Caco-2 (cell line): ENCODE measurements at regions of chr3 and their contacts with region 1.

Region 1: DNA sequence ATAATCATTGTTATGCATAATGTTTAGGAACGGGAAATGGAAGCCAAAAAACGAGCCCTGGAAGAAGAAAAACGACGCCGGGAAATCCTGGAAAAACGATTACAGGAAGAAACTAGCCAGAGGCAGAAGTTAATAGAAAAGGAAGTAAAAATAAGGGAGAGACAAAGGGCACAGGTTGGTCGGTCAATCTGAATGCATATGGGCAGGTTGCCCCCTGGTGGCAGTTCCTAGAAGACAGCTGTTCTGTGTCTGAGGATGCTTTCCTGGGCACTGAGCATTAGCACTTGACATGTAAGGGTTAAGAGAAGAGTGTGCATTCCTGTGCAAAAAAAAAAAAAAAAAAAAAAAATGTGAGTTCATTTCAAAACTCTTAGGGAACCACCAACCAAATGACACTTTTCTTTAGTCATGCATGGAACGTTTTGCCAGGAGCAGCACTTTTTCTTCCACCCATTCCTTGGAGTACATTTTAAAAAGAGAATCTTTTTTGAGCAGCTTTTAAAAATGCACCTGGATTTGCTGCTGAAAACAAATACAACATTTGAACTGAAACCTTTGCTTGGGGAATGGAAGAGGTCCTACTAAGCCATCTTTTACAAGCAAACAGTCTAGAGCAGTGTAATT is 11.1 kb upstream of the ABHD10 start:
- DNase-seq: peak; percentile 80 to 86
- H3K4me3 ChIP-seq: no peak overlapping the region
- H3K4me3 Mint-ChIP-seq: no peak overlapping the region
- H3K27ac Mint-ChIP-seq: peak overlapping the region; percentile 0
- H3K4me1 ChIP-seq: peaks cover 6% of the 10 kb centered on the region
- H3K4me1 Mint-ChIP-seq: peaks cover 12% of the 10 kb centered on the region
- H3K27me3 ChIP-seq: no peaks in the 10 kb centered on the region
- H3K27me3 Mint-ChIP-seq: no peaks in the 10 kb centered on the region
- CTCF ChIP-seq: peak; percentile 74 to 88

Region 2: GRCh38 chr3:111577794-111578685 is 389.7 kb before region 1 on chr3:
- CTCF ChIA-PET with region 1: no interaction called
- POLR2A ChIA-PET with region 1: no interaction called
- intact Hi-C with region 1: loop called (anchors 5 kb)
- DNase-seq: peak in 1 of 2 experiments; percentile 48
- H3K4me3 ChIP-seq: no peak overlapping the region
- H3K4me3 Mint-ChIP-seq: no peak overlapping the region
- H3K27ac Mint-ChIP-seq: no peak overlapping the region
- H3K4me1 ChIP-seq: peaks cover 20% of the 10 kb centered on the region
- H3K4me1 Mint-ChIP-seq: peaks cover 30% of the 10 kb centered on the region
- H3K27me3 ChIP-seq: no peaks in the 10 kb centered on the region
- H3K27me3 Mint-ChIP-seq: no peaks in the 10 kb centered on the region
- CTCF ChIP-seq: peak in 1 of 2 experiments; percentile 63

Region 3: DNA sequence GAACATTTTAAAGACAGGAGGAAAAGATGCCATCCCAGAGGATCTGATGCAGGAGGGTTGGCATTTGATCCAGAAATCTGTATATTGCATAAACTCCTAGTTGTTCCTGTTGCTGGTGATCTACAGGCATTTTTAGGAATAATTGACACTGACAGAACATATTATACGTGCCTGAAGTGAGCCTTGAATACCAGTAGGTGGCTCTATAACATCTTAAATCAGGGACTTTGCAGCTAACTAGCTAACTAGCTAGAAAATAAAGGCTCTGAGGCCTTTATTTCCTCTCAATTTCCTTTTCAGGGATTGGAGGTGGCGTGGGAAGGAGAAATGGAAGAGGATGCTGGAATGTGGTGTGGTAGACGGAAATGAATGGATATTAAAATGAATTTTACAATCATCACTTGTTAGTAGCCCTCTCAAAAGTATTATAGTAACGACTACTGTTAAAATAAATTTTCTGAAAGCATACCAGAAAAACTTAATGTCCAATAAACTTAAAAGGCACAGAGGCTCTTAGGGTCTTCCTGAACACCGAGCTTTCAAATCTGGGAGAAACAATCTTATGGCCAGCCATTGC is 298.8 kb before region 1 on chr3:
- CTCF ChIA-PET with region 1: interaction called, 6 read pairs
- POLR2A ChIA-PET with region 1: no interaction called
- intact Hi-C with region 1: loop called (anchors 1 kb)
- DNase-seq: peak in 1 of 2 experiments; percentile 30
- H3K4me3 ChIP-seq: no peak overlapping the region
- H3K4me3 Mint-ChIP-seq: no peak overlapping the region
- H3K27ac Mint-ChIP-seq: no peak overlapping the region
- H3K4me1 ChIP-seq: peaks cover 4% of the 10 kb centered on the region; the same call in 1 of the 2 replicates
- H3K4me1 Mint-ChIP-seq: peaks cover 18% of the 10 kb centered on the region
- H3K27me3 ChIP-seq: no peaks in the 10 kb centered on the region
- H3K27me3 Mint-ChIP-seq: no peaks in the 10 kb centered on the region
- CTCF ChIP-seq: peak; percentile 46 to 70

Region 4: GRCh38 chr3:111859974-111860859 is 107.5 kb before region 1 on chr3:
- CTCF ChIA-PET with region 1: interaction called, 6 read pairs
- POLR2A ChIA-PET with region 1: no interaction called
- intact Hi-C with region 1: loop called (anchors 1 kb)
- DNase-seq: peak; percentile 71 to 73
- H3K4me3 ChIP-seq: peak overlapping the region; percentile 95
- H3K4me3 Mint-ChIP-seq: peak overlapping the region; percentile 93
- H3K27ac Mint-ChIP-seq: peak overlapping the region; percentile 80
- H3K4me1 ChIP-seq: peaks cover 25% of the 10 kb centered on the region
- H3K4me1 Mint-ChIP-seq: peaks cover 47% of the 10 kb centered on the region
- H3K27me3 ChIP-seq: no peaks in the 10 kb centered on the region
- H3K27me3 Mint-ChIP-seq: no peaks in the 10 kb centered on the region
- CTCF ChIP-seq: peak; percentile 26 to 44

Region 5: GRCh38 chr3:111895079-111895478 is 72.7 kb before region 1 on chr3:
- CTCF ChIA-PET with region 1: interaction called, 5 read pairs
- POLR2A ChIA-PET with region 1: no interaction called
- intact Hi-C with region 1: loop called (anchors 1 kb)
- DNase-seq: no peak
- H3K4me3 ChIP-seq: no peak overlapping the region
- H3K4me3 Mint-ChIP-seq: no peak overlapping the region
- H3K27ac Mint-ChIP-seq: no peak overlapping the region
- H3K4me1 ChIP-seq: no peaks in the 10 kb centered on the region
- H3K4me1 Mint-ChIP-seq: no peaks in the 10 kb centered on the region
- H3K27me3 ChIP-seq: no peaks in the 10 kb centered on the region
- H3K27me3 Mint-ChIP-seq: no peaks in the 10 kb centered on the region
- CTCF ChIP-seq: peak; percentile 20 to 39

Region 6: GRCh38 chr3:111978493-111979433 is 11.0 kb after region 1 on chr3 and contains the start of gene ABHD10:
- CTCF ChIA-PET with region 1: interaction called, 17 read pairs
- POLR2A ChIA-PET with region 1: no interaction called
- intact Hi-C with region 1: no loop called
- DNase-seq: peak; percentile 93 to 96
- H3K4me3 ChIP-seq: peak within 1 kb of the TSS; percentile 79
- H3K4me3 Mint-ChIP-seq: peak within 1 kb of the TSS; percentile 84
- H3K27ac Mint-ChIP-seq: peak within 1 kb of the TSS; percentile 88
- H3K4me1 ChIP-seq: no peaks in the 10 kb centered on the region; the same call in 1 of the 2 replicates
- H3K4me1 Mint-ChIP-seq: peaks cover 7% of the 10 kb centered on the region
- H3K27me3 ChIP-seq: no peaks in the 10 kb centered on the region
- H3K27me3 Mint-ChIP-seq: no peaks in the 10 kb centered on the region
- CTCF ChIP-seq: no peak
- total RNA-seq, gene ABHD10: 37.0 and 41.8 TPM in 2 replicates